ENCODE measurements at regions of chrX and their contacts with region 1.

Region 1: GRCh38 chrX:55160685-55161552 is 59.2 kb upstream of the PAGE5 start:
- DNase-seq: peak; percentile 93
- ATAC-seq: peak; percentile 96
- H3K4me3 Mint-ChIP-seq: peak overlapping the region; percentile 79
- H3K27ac Mint-ChIP-seq: peak overlapping the region; percentile 89
- H3K4me1 Mint-ChIP-seq: peaks cover 10% of the 10 kb centered on the region
- H3K27me3 Mint-ChIP-seq: no peaks in the 10 kb centered on the region

Region 2: DNA sequence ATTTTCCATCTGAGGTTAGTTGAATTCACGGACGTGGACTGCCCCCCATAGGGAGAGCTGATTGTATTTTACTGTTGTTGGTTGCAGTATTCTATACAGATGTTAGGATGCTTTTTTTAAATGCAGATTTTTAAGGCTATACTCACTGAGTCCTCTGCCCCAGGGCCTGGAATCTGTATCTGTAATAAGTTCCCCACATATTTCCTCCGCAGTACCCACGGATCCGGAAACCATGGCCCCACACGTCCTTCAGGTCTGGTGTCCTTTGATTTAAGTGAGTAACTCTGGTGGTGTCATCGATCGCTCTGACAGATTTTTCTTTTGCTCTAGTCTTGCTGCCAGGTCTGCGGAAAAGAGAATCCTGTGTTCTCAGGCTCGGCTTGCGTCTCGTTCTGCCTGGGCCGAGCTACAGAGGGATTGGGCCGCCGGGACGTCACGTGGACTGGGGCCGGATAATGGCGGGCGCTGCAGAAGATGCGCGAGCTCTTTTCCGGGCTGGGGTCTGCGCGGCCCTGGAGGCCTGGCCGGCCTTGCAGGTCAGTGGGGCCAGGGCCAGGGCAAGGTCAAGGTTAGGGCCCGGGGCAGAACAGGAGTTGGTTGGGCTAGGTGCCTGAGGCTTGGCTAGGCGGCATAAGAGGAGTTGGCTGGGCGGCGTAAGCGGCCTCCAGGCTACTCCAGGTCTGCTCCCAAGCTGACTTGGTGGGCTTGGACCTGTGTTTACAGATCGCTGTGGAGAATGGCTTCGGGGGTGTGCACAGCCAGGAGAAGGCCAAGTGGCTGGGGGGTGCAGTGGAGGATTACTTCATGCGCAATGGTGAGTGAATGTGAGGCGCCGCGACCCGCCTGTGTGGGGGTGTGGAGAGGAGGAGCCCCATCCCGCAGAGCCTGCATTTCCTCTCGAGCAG is 720.7 kb before region 1 on chrX and contains the start of gene TSR2:
- CTCF ChIA-PET with region 1: no interaction called
- POLR2A ChIA-PET with region 1: no interaction called
- intact Hi-C with region 1: loop called in 1 of 2 experiments (anchors 1 kb)
- DNase-seq: peak; percentile 88
- ATAC-seq: peak; percentile 96
- H3K4me3 Mint-ChIP-seq: peak within 1 kb of the TSS; percentile 88
- H3K27ac Mint-ChIP-seq: peak within 1 kb of the TSS; percentile 83
- H3K4me1 Mint-ChIP-seq: peaks cover 18% of the 10 kb centered on the region
- H3K27me3 Mint-ChIP-seq: no peaks in the 10 kb centered on the region
- total RNA-seq, gene TSR2: 31.0 to 34.1 TPM

Region 3: GRCh38 chrX:54639346-54640102 is 521.4 kb before region 1 on chrX:
- CTCF ChIA-PET with region 1: no interaction called
- POLR2A ChIA-PET with region 1: no interaction called
- intact Hi-C with region 1: loop called in 1 of 2 experiments (anchors 1 kb)
- DNase-seq: peak; percentile 96
- ATAC-seq: peak; percentile 93
- H3K4me3 Mint-ChIP-seq: peak overlapping the region; percentile 84
- H3K27ac Mint-ChIP-seq: peak overlapping the region; percentile 92
- H3K4me1 Mint-ChIP-seq: peaks cover 6% of the 10 kb centered on the region
- H3K27me3 Mint-ChIP-seq: no peaks in the 10 kb centered on the region

Region 4: DNA sequence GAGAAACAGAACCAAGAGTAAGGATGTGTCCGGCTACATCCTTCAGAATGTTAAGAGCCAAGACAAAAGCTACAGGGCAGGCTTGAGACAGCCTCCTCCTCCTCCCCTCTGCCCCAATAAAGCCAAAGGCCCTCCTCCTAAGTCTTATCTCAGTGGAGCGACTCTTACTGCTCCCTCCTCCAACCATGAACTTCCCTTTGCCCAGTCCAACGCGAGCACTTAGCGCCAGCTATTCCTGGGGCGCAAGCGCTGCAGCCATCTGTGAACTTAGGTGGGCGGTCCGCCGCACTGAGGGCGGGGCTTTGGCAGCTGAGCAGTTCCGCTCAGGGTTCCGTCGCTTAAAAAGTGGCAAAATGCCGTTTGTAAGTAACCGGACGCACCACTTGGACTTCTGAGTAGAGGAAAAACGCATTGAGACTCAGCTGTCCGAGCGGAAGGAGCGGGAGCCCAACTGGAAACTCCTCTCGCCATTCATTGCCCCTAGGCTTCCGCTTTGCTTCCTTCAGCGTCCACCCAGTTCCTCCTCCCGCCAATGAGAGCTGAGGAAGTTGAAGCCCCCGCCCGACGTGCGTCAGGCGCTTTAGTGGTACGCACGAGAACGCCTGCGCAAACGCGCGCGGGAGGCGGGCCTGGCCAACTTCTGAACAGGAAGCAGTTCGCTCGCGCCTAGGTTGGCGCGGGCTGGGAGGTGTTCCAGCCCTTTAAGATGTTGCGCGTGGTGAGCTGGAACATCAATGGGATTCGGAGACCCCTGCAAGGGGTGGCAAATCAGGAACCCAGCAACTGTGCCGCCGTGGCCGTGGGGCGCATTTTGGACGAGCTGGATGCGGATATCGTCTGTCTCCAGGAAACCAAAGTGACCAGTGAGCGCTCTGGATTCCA is 161.0 kb before region 1 on chrX and contains the start of gene APEX2:
- CTCF ChIA-PET with region 1: interaction called, 3 read pairs
- POLR2A ChIA-PET with region 1: no interaction called
- intact Hi-C with region 1: loop called in 1 of 2 experiments (anchors 1 kb)
- DNase-seq: peak; percentile 92
- ATAC-seq: peak; percentile 96
- H3K4me3 Mint-ChIP-seq: peak within 1 kb of the TSS; percentile 94
- H3K27ac Mint-ChIP-seq: peak within 1 kb of the TSS; percentile 94
- H3K4me1 Mint-ChIP-seq: peaks cover 21% of the 10 kb centered on the region
- H3K27me3 Mint-ChIP-seq: no peaks in the 10 kb centered on the region
- total RNA-seq, gene APEX2: 37.7 to 41.4 TPM

Region 5: GRCh38 chrX:55579114-55579513 is 418.2 kb after region 1 on chrX:
- CTCF ChIA-PET with region 1: no interaction called
- POLR2A ChIA-PET with region 1: no interaction called
- intact Hi-C with region 1: no loop called
- DNase-seq: no peak
- ATAC-seq: no peak
- H3K4me3 Mint-ChIP-seq: no peak overlapping the region
- H3K27ac Mint-ChIP-seq: no peak overlapping the region
- H3K4me1 Mint-ChIP-seq: no peaks in the 10 kb centered on the region
- H3K27me3 Mint-ChIP-seq: no peaks in the 10 kb centered on the region

Region 6: DNA sequence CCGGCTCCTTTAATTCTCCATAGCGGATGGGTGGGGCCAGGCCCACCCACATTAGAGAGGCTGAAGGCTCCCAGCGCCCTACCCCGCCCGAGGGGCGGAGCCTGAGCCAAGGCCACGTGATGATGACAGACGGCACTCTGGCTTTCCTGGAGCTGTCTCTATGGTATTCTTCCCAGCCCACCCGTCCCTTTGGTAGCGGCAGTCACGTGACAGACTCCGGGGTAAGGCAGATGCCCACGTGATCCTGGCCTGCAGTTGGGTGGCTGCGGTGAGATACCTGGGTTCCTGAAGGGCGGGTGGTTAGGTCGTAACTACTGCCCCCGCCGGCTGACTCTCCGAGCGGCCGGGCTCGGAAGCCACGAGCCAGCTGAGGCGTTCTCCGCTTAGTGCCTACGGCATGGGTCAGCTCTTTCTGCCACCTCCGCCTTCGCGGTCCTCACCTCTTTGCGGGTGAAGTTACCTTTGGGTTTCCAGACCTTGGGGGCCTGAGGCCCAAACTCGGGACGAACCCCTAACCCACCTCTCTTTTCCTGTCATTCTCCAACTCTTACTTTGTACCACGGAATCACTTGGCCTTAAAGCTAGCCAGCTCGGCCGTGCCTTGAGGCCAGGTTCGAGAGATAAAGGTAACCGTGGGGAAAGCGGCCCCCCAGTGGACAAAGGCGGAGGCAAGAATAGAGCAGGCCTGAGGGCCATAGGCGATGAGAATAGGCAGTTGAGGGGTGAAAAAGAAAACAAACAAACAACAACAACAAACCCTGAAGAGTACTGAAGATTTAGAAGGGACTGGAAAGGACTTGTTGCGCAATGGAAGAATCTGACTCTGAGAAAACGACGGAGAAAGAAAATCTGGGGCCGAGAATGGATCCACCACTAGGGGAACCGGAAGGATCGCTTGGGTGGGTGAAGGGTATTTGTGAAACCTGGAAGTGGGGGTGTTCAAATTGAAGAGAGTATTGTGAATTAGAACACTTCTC is 556.9 kb after region 1 on chrX and contains the start of gene RRAGB:
- CTCF ChIA-PET with region 1: no interaction called
- POLR2A ChIA-PET with region 1: no interaction called
- intact Hi-C with region 1: loop called (anchors 1 to 5 kb)
- DNase-seq: peak; percentile 93
- ATAC-seq: peak; percentile 99
- H3K4me3 Mint-ChIP-seq: peak within 1 kb of the TSS; percentile 87
- H3K27ac Mint-ChIP-seq: peak within 1 kb of the TSS; percentile 87
- H3K4me1 Mint-ChIP-seq: peaks cover 33% of the 10 kb centered on the region
- H3K27me3 Mint-ChIP-seq: no peaks in the 10 kb centered on the region
- total RNA-seq, gene RRAGB: 4.3 to 5.0 TPM

Region 7: GRCh38 chrX:55907968-55908607 is 747.2 kb after region 1 on chrX:
- CTCF ChIA-PET with region 1: no interaction called
- POLR2A ChIA-PET with region 1: no interaction called
- intact Hi-C with region 1: loop called in 1 of 2 experiments (anchors 2 kb)
- DNase-seq: peak; percentile 71
- ATAC-seq: peak; percentile 75
- H3K4me3 Mint-ChIP-seq: peak overlapping the region; percentile 79
- H3K27ac Mint-ChIP-seq: peak overlapping the region; percentile 90
- H3K4me1 Mint-ChIP-seq: peaks cover 17% of the 10 kb centered on the region
- H3K27me3 Mint-ChIP-seq: no peaks in the 10 kb centered on the region